Sciatic nerve (tissue), 2 donors: ENCODE measurements at regions of chr2 and their contacts with region 1.

Region 1: GRCh38 chr2:118855451-118856279 is 8.2 kb upstream of the EN1 start:
- DNase-seq: peak; percentile 91
- ATAC-seq: peak; percentile 91

Region 2: DNA sequence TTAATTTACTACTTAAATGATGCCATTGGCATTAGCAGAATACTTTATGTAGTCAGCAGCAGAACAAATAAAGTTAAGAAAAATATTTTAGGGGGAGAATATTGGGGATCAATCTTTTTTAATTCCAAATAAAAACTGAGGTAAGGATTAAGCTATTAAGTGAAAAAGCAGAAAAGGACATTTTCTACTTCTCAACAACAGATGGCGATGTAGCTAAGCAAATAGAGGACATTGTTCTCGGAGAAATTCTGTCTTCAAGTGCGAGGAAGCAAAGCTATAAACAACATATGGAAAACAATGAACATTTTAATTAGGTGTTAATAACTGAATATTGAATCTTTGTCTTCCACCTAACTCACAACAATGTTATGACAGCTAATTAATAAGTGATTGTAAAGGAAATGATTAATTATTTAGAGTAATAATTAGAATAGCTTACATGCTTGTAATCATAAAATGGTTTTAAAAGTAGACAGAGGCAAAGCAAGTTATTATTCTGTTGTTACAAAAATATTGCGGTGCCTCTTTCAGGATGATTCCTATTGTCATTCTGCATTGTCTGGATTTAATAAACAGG is 808.9 kb before region 1 on chr2:
- intact Hi-C with region 1: loop called (anchors 5 kb)
- DNase-seq: no peak
- ATAC-seq: peak; percentile 64

Region 3: DNA sequence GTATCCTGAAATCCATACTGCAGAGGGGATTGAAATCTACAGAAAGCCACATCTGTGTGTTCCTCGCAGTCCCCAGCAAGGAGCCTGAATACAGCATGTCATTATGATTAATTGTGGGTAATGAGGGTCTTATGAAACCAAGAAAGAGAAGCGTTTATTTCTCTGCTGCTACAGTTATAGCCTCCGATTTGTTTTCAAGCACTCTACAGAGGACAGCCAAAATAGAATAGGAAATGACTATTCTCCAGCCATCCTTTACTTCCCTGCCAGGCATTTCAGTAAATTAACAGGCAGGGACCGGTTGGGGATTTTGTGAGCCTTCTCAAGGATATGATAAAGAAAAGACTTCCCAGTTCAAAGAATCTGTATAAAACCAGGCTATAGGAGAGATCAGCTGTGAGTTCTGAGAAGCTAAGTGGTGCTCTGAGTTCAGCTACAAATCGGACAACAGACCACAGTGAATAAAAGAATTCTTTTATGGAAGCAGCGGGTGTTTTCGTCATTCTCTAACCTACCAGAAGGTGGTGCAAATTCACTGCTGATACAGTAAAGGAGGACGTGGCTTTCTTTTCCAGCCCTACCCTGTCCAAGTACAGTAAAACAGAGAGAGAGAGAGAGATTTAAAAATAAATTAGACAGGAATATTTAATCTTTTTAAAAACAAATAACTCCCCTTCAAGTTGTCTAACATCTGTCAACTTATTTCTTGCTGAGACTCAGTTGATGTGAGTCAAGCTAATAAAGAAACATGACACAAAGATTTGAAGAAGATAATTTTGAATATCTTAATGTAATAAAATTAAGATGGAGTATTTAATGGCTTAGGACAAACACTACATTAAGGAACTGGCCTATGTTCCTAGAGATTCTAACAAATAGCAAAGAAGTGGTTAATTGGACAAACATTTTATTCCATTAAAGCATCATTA is 633.7 kb before region 1 on chr2:
- intact Hi-C with region 1: loop called (anchors 10 kb)
- DNase-seq: no peak
- ATAC-seq: peak; percentile 83